OCI-LY7 (cell line): ENCODE measurements at regions of chr16 and their contacts with region 1.

Region 1: DNA sequence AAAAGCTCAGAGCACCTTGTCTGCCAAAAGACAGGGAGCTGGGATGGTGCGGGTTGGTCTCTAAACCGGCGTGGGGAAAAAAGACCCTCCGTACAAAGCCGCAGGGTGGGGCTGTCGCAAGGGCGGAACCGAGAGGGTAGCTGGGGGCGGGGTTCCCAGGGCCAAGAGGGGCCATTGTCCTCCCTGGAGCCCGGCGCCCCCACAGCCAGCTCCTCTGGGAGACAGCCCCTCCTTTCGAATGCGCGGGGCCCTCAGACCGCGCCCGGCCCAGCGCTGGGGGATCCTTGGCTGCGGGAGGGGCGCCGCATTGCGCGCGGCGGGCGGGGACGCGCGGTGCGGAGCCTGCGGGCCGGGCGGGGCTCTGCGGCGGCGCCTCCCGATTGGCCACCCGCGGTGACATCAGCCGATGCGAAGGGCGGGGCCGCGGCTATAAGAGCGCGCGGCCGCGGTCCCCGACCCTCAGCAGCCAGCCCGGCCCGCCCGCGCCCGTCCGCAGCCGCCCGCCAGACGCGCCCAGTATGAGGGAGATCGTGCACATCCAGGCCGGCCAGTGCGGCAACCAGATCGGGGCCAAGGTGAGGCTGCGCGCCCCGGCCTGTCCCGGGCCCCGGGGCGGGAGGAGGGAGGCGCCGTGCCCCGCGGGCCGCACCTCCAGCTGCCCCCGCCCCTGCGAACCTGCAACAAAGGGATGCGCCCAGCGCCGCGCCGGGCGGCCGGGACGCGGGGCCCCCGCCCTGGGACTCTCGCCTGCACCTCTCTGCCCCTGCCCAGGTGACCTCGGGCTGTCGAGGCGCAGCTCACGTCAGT is at the start of gene TUBB3:
- DNase-seq: peak; percentile 90
- H3K4me3 ChIP-seq: peak within 1 kb of the TSS; percentile 94
- H3K27ac ChIP-seq: peak within 1 kb of the TSS; percentile 69
- H3K4me1 ChIP-seq: peaks cover 51% of the 10 kb centered on the region
- CTCF ChIP-seq: peak; percentile 47; the same call in 1 of the 2 replicates
- total RNA-seq, gene TUBB3: 59.6 and 63.7 TPM in 2 replicates

Region 2: DNA sequence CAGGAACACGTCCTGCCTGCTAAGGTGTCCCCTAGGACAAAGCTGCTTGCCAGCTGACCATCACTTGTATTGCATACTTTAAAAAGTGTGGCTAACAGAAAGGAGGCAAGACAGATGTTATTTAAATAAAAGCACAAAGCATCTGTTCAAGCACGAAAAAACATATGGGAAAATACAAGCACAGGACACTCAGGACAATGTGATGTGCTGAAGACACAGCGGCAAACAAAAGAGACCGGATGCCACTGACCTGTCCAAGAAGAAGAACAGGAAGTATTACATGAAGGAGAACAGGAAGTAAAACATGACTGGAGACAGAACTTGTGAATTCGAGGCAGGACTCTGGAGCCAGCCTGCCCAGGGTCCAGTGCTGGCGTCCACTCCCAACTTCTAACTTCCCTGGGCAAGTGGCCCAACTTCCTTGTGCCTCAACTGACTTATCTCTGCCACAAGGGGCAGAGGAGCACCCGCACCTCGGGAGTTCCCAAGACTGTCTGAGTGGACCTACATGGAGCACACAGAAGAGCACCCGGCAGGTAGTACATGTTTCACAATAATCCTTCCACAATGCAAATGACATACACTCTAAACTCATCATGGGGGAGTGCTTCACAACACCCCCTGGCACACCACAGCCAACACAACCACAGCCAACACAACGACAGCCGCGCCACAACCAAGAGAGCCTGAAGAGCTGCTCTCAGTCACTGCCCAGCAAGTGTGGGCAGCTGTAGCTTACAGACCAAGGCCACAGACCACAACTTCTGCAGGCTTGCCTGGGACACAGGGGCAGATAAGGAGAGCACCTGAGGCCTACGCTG is 469.4 kb before region 1 on chr16:
- CTCF ChIA-PET with region 1: no interaction called
- POLR2A ChIA-PET with region 1: no interaction called
- intact Hi-C with region 1: no loop called
- DNase-seq: no peak
- H3K4me3 ChIP-seq: no peak overlapping the region
- H3K27ac ChIP-seq: no peak overlapping the region
- H3K4me1 ChIP-seq: peaks cover 57% of the 10 kb centered on the region
- CTCF ChIP-seq: peak; percentile 47

Region 3: GRCh38 chr16:89860747-89861304 is 62.3 kb before region 1 on chr16:
- CTCF ChIA-PET with region 1: no interaction called
- POLR2A ChIA-PET with region 1: no interaction called
- intact Hi-C with region 1: no loop called
- DNase-seq: peak; percentile 77
- H3K4me3 ChIP-seq: no peak overlapping the region
- H3K27ac ChIP-seq: no peak overlapping the region
- H3K4me1 ChIP-seq: peaks cover 53% of the 10 kb centered on the region
- CTCF ChIP-seq: peak; percentile 96

Region 4: GRCh38 chr16:89956505-89957215 is 33.6 kb after region 1 on chr16:
- CTCF ChIA-PET with region 1: no interaction called
- POLR2A ChIA-PET with region 1: interaction called, 8 read pairs
- intact Hi-C with region 1: loop called (anchors 1 kb)
- DNase-seq: peak; percentile 88
- H3K4me3 ChIP-seq: peak overlapping the region; percentile 35
- H3K27ac ChIP-seq: peak overlapping the region; percentile 97
- H3K4me1 ChIP-seq: peaks cover 71% of the 10 kb centered on the region
- CTCF ChIP-seq: no peak

Region 5: GRCh38 chr16:89972244-89973234 is 49.5 kb after region 1 on chr16:
- CTCF ChIA-PET with region 1: no interaction called
- POLR2A ChIA-PET with region 1: interaction called, 10 read pairs
- intact Hi-C with region 1: loop called (anchors 2 kb)
- DNase-seq: peak; percentile 95
- H3K4me3 ChIP-seq: peak overlapping the region; percentile 84
- H3K27ac ChIP-seq: peak overlapping the region; percentile 50
- H3K4me1 ChIP-seq: peaks cover 38% of the 10 kb centered on the region
- CTCF ChIP-seq: no peak; the same call in 1 of the 2 replicates

Region 6: DNA sequence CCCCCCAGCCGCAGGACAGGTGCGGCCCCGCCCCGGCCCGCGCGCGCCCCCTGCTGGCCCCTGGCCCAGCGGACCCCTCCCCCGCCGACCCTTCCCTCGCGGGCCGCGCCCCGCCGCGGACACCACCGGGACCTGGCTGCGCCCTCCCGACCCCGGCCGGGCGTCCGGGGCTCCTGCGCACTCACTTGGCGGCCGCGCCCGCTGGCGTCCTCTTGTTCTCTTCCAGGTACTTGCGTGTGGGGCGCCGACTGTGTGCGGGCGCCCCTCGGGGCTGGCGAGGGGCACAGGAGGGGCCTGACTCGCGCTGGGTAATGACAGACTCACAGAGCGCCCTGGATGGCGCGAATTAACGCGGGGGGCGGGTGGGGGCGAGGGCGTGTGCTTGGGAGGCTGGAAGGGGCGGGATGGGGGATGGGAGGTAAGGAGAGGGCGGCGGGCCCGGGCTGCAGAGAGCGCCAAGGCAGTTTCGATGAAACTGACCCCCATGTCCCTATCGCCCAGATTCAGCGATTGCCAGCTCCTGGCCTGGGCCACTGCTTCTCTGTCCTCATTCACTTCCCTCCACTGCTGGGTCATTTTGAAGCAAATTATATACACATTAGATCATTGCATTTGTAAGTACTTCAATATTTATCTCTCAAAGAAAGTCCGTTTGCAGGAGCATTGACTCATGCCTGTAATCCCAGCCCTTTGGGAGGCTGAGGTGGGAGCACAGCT is 96.6 kb after region 1 on chr16:
- CTCF ChIA-PET with region 1: no interaction called
- POLR2A ChIA-PET with region 1: interaction called, 3 read pairs
- intact Hi-C with region 1: loop called (anchors 2 kb)
- DNase-seq: peak; percentile 57
- H3K4me3 ChIP-seq: peak overlapping the region; percentile 58
- H3K27ac ChIP-seq: no peak overlapping the region
- H3K4me1 ChIP-seq: peaks cover 32% of the 10 kb centered on the region
- CTCF ChIP-seq: peak; percentile 62

Region 7: GRCh38 chr16:90046971-90047713 is 124.1 kb after region 1 on chr16:
- CTCF ChIA-PET with region 1: no interaction called
- POLR2A ChIA-PET with region 1: no interaction called
- intact Hi-C with region 1: no loop called
- DNase-seq: no peak
- H3K4me3 ChIP-seq: no peak overlapping the region
- H3K27ac ChIP-seq: no peak overlapping the region
- H3K4me1 ChIP-seq: no peaks in the 10 kb centered on the region
- CTCF ChIP-seq: no peak

Region 8: GRCh38 chr16:90077226-90077756 is 154.2 kb after region 1 on chr16 and contains the start of gene PRDM7:
- CTCF ChIA-PET with region 1: no interaction called
- POLR2A ChIA-PET with region 1: no interaction called
- intact Hi-C with region 1: loop called (anchors 5 kb)
- DNase-seq: peak; percentile 96
- H3K4me3 ChIP-seq: peak within 1 kb of the TSS; percentile 63
- H3K27ac ChIP-seq: no peak within 1 kb of the TSS
- H3K4me1 ChIP-seq: peaks cover 12% of the 10 kb centered on the region
- CTCF ChIP-seq: no peak
- total RNA-seq, gene PRDM7: not detected in 2 replicates